A673 (cell line): ENCODE measurements at regions of chr5 and their contacts with region 1.

Region 1: GRCh38 chr5:150846654-150847333 is 473 bp downstream of the IRGM start:
- DNase-seq: peak; percentile 87
- H3K4me3 ChIP-seq: no peak overlapping the region
- H3K27ac ChIP-seq: no peak overlapping the region
- H3K4me1 ChIP-seq: no peaks in the 10 kb centered on the region
- H3K27me3 ChIP-seq: no peaks in the 10 kb centered on the region
- CTCF ChIP-seq: peak; percentile 83

Region 2: GRCh38 chr5:150540615-150541396 is 306.0 kb before region 1 on chr5:
- CTCF ChIA-PET with region 1: no interaction called
- POLR2A ChIA-PET with region 1: no interaction called
- intact Hi-C with region 1: no loop called
- DNase-seq: no peak
- H3K4me3 ChIP-seq: no peak overlapping the region
- H3K27ac ChIP-seq: no peak overlapping the region
- H3K4me1 ChIP-seq: no peaks in the 10 kb centered on the region
- H3K27me3 ChIP-seq: no peaks in the 10 kb centered on the region
- CTCF ChIP-seq: no peak

Region 3: GRCh38 chr5:150672237-150672883 is 174.4 kb before region 1 on chr5:
- CTCF ChIA-PET with region 1: no interaction called
- POLR2A ChIA-PET with region 1: no interaction called
- intact Hi-C with region 1: loop called (anchors 10 kb)
- DNase-seq: peak; percentile 52
- H3K4me3 ChIP-seq: peak overlapping the region; percentile 64
- H3K27ac ChIP-seq: peak overlapping the region; percentile 66
- H3K4me1 ChIP-seq: peaks cover 12% of the 10 kb centered on the region
- H3K27me3 ChIP-seq: no peaks in the 10 kb centered on the region
- CTCF ChIP-seq: no peak

Region 4: GRCh38 chr5:150801117-150801927 is 45.5 kb before region 1 on chr5:
- CTCF ChIA-PET with region 1: interaction called, 20 read pairs
- POLR2A ChIA-PET with region 1: no interaction called
- intact Hi-C with region 1: no loop called
- DNase-seq: peak; percentile 83
- H3K4me3 ChIP-seq: peak overlapping the region; percentile 42
- H3K27ac ChIP-seq: no peak overlapping the region
- H3K4me1 ChIP-seq: no peaks in the 10 kb centered on the region
- H3K27me3 ChIP-seq: no peaks in the 10 kb centered on the region
- CTCF ChIP-seq: peak; percentile 59